ENCODE measurements at regions of chr2 and their contacts with region 1.

Region 1: DNA sequence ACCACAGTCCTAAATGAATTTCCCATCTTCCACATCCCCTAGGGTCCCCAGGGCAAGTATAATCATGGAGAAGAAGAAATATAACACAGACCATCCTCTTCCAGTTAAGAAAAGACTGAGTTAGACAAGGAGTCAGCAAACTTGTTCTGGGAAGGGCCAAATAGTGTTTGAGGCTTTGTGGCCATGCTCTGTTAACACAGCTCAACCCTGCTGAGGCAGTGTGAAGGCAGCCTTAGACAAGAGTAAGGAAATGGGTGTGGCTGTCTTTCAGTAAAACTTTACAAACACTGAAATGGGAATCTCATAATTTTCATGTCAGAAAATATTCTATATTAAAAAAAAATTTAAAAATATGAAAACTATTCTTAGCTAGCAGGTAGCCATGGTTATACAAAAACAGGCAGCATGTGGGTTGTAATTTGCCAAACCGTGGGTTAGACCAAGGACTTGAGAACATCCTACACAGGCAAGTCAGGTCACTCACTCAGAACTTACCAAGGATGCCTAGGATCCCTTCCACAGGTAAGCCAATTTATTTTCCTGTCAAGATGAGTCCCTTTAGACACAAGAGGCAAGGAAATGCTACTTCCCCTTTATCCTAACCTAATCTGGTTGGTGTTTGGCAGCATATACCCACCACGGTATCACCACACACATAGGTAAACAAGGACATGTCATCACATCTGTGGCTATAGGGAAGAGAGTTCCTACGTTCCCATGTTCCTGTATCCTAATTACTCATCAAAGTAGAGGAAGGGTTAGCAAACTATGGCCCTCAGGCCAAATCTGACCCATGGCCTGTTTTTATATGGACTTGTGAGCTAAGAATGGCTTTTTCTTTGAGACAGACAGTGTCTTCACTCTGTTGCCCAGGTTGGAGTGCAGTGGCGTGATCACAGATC is 31.9 kb downstream of the C2orf74 start:
- DNase-seq: no peak
- ATAC-seq: peak in 1 of 4 donors; percentile 19
- H3K4me3 ChIP-seq: no peak overlapping the region
- H3K27ac ChIP-seq: no peak overlapping the region
- H3K4me1 ChIP-seq: no peaks in the 10 kb centered on the region
- H3K27me3 ChIP-seq: no peaks in the 10 kb centered on the region
- CTCF ChIP-seq: no peak

Region 2: GRCh38 chr2:61229936-61230335 is 36.0 kb after region 1 on chr2:
- intact Hi-C with region 1: loop called in 1 of 2 experiments (anchors 5 kb)
- DNase-seq: no peak
- ATAC-seq: no peak
- H3K4me3 ChIP-seq: no peak overlapping the region
- H3K27ac ChIP-seq: no peak overlapping the region
- H3K4me1 ChIP-seq: no peaks in the 10 kb centered on the region
- H3K27me3 ChIP-seq: no peaks in the 10 kb centered on the region
- CTCF ChIP-seq: no peak

Measured in psoas muscle (tissue), 8 donors.